MCF 10A (cell line): ENCODE measurements at regions of chr1 and their contacts with region 1.

Region 1: DNA sequence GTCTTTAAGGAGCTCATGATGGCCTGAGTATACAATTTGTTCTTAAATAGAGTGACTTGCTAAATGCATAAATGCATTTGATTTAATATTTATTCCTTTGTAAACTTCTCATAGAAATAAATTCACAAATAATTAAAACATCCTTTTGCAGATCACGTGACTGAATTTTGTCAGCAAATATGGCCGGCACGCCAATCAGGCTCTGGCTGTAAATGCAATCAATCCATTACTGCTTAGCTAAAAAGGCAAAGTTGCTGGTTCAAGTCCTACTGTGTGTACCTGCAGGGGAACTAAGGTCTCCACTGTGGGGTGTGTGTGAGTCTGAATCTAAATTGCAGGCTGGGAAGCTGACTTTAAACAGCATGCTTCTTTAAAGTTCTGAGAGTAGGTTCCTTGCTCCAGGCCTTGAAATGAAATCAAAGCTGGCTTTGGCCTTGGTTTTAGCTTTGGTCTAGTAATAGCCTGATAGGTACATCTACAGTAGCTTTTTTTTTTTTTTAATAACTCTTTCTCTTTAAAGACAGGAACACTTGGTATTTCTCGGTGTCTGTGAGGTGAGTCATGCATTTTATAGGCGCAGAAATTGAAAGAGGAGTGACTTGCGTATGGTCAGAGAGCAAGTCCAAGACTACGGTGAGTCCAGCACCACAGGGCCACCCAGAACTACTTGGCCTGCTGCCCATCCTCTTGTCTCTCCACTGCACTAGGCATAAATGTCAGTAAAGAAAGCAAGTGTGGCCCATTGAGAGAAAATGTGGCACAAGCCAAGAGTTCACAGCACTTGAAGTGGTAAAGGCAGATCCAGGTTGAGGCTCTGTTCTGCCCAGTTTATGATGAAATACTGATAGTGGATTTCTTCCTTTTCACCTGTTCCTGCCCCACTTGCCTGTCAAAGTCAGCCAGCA is 36.2 kb upstream of the LYST start:
- DNase-seq: peak; percentile 99
- H3K4me3 Mint-ChIP-seq: peak overlapping the region; percentile 15
- H3K27ac Mint-ChIP-seq: peak overlapping the region; percentile 61
- H3K4me1 Mint-ChIP-seq: peaks cover 44% of the 10 kb centered on the region
- H3K27me3 Mint-ChIP-seq: no peaks in the 10 kb centered on the region
- CTCF ChIP-seq: no peak

Region 2: GRCh38 chr1:235127203-235127602 is 775.7 kb before region 1 on chr1:
- CTCF ChIA-PET with region 1: no interaction called
- POLR2A ChIA-PET with region 1: no interaction called
- intact Hi-C with region 1: no loop called
- DNase-seq: no peak
- H3K4me3 Mint-ChIP-seq: peak overlapping the region; percentile 100
- H3K27ac Mint-ChIP-seq: peak overlapping the region; percentile 99
- H3K4me1 Mint-ChIP-seq: peaks cover 37% of the 10 kb centered on the region
- H3K27me3 Mint-ChIP-seq: no peaks in the 10 kb centered on the region
- CTCF ChIP-seq: no peak

Region 3: GRCh38 chr1:235725434-235725833 is 177.5 kb before region 1 on chr1:
- CTCF ChIA-PET with region 1: no interaction called
- POLR2A ChIA-PET with region 1: no interaction called
- intact Hi-C with region 1: no loop called
- DNase-seq: no peak
- H3K4me3 Mint-ChIP-seq: no peak overlapping the region
- H3K27ac Mint-ChIP-seq: no peak overlapping the region
- H3K4me1 Mint-ChIP-seq: peaks cover 4% of the 10 kb centered on the region
- H3K27me3 Mint-ChIP-seq: no peaks in the 10 kb centered on the region
- CTCF ChIP-seq: no peak

Region 4: GRCh38 chr1:235883261-235883927 is 19.5 kb before region 1 on chr1:
- CTCF ChIA-PET with region 1: interaction called, 4 read pairs
- POLR2A ChIA-PET with region 1: interaction called, 24 read pairs
- intact Hi-C with region 1: no loop called
- DNase-seq: peak; percentile 98
- H3K4me3 Mint-ChIP-seq: peak overlapping the region; percentile 5
- H3K27ac Mint-ChIP-seq: no peak overlapping the region
- H3K4me1 Mint-ChIP-seq: peaks cover 21% of the 10 kb centered on the region
- H3K27me3 Mint-ChIP-seq: no peaks in the 10 kb centered on the region
- CTCF ChIP-seq: no peak